CD4-positive, alpha-beta memory T cell (primary cell): ENCODE measurements at regions of chr6 and their contacts with region 1.

Region 1: GRCh38 chr6:26025894-26026832 is 61.1 kb upstream of the HFE start:
- DNase-seq: peak; percentile 90 to 98 (median 94)
- H3K4me3 ChIP-seq: peak overlapping the region; percentile 67 to 74
- H3K4me3 Mint-ChIP-seq: peak overlapping the region; percentile 85 to 98 (median 92)
- H3K27ac ChIP-seq: peak overlapping the region; percentile 89
- H3K27ac Mint-ChIP-seq: peak overlapping the region; percentile 96 to 100 (median 99)
- H3K4me1 ChIP-seq: peaks cover 29% of the 10 kb centered on the region
- H3K4me1 Mint-ChIP-seq: peaks cover 22 to 60% (median 39%) of the 10 kb centered on the region in 4 donors
- H3K27me3 ChIP-seq: no peaks in the 10 kb centered on the region
- H3K27me3 Mint-ChIP-seq: peaks cover 0 to 4% of the 10 kb centered on the region in 2 donors

Region 2: GRCh38 chr6:25992413-25993037 is 33.6 kb before region 1 on chr6:
- CTCF ChIA-PET with region 1: interaction called, 70 read pairs
- POLR2A ChIA-PET with region 1: interaction called, 75 read pairs
- intact Hi-C with region 1: loop called (anchors 1 kb)
- DNase-seq: peak; percentile 85 to 94 (median 89)
- H3K4me3 ChIP-seq: peak overlapping the region; percentile 72 to 95
- H3K4me3 Mint-ChIP-seq: peak overlapping the region; percentile 91 to 95 (median 94)
- H3K27ac ChIP-seq: peak overlapping the region; percentile 64
- H3K27ac Mint-ChIP-seq: peak overlapping the region; percentile 89 to 96 (median 94)
- H3K4me1 ChIP-seq: no peaks in the 10 kb centered on the region
- H3K4me1 Mint-ChIP-seq: peaks cover 9 to 23% (median 16%) of the 10 kb centered on the region in 4 donors
- H3K27me3 ChIP-seq: no peaks in the 10 kb centered on the region
- H3K27me3 Mint-ChIP-seq: no peaks in the 10 kb centered on the region

Region 3: DNA sequence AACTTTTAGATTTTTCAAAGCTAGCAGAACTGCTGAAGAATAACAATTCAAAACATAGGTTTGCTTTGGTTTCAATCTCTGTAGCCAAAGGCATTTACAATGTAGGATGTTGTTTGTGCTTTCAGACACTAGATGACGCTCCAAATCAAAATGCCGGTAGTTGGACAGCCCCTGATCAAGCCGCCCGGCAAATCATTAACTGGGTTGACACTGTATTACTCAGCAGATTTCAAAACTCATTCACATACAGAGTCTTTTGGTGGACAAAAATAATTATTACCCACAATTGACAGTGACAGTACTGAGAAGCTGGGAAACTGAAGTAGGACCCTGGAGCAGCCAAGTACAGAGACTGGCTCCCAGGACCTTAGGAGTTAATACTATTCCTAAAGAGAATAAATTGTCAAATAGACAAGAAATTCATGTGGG is 39.8 kb after region 1 on chr6:
- CTCF ChIA-PET with region 1: interaction called, 15 read pairs
- POLR2A ChIA-PET with region 1: interaction called, 7 read pairs
- intact Hi-C with region 1: no loop called
- DNase-seq: peak; percentile 70 to 76 (median 71)
- H3K4me3 ChIP-seq: no peak overlapping the region
- H3K4me3 Mint-ChIP-seq: no peak overlapping the region
- H3K27ac ChIP-seq: no peak overlapping the region
- H3K27ac Mint-ChIP-seq: peak overlapping the region in 1 of 7 donors; percentile 30
- H3K4me1 ChIP-seq: no peaks in the 10 kb centered on the region
- H3K4me1 Mint-ChIP-seq: peaks cover 4 to 12% (median 7%) of the 10 kb centered on the region in 4 donors
- H3K27me3 ChIP-seq: no peaks in the 10 kb centered on the region
- H3K27me3 Mint-ChIP-seq: peaks cover 0 to 4% of the 10 kb centered on the region in 2 donors

Region 4: DNA sequence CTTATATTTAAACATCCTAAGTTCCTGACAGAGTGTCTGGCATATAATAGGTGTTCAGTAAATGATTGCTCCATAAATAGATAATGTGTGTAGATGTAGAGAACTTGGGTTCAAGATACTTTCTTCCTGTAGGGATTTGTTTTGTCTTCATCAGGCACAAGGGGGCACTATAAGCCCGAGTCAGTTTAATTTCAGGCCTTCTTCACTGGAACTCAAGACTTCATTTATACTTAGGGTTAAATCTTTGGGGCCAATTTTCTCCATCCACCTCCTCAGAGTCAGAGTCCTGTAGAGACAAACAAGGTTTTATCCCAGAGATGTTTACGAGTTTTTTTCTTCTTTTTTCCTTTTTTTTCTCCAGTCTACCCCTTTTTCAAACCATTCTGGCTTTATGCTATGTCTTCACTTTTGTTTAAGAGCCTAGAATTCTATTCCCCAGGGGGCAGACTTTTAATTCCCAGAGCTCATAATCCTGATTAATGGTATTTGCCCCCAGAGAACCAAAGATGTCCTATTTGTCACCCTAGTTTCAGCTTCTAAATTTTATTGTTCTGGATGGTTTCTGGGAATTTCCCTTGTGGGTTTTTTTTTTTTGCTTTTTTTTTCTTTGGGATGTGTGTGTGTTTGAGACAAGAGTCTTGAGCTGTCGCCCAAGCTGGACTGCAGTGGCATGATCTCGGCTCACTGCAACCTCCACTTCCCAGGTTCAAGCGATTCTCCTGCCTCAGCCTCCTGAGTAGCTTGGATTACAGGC is 149.4 kb after region 1 on chr6:
- CTCF ChIA-PET with region 1: no interaction called
- POLR2A ChIA-PET with region 1: interaction called, 12 read pairs
- intact Hi-C with region 1: no loop called
- DNase-seq: peak; percentile 50 to 73 (median 70)
- H3K4me3 ChIP-seq: no peak overlapping the region
- H3K4me3 Mint-ChIP-seq: peak overlapping the region in 4 of 8 donors; percentile 37 to 70 (median 65)
- H3K27ac ChIP-seq: no peak overlapping the region
- H3K27ac Mint-ChIP-seq: peak overlapping the region; percentile 28 to 89 (median 78)
- H3K4me1 ChIP-seq: peaks cover 37% of the 10 kb centered on the region
- H3K4me1 Mint-ChIP-seq: peaks cover 21 to 40% (median 27%) of the 10 kb centered on the region in 4 donors
- H3K27me3 ChIP-seq: no peaks in the 10 kb centered on the region
- H3K27me3 Mint-ChIP-seq: no peaks in the 10 kb centered on the region

Region 5: GRCh38 chr6:26234421-26235296 is 208.5 kb after region 1 on chr6:
- CTCF ChIA-PET with region 1: no interaction called
- POLR2A ChIA-PET with region 1: interaction called, 42 read pairs
- intact Hi-C with region 1: no loop called
- DNase-seq: peak; percentile 70 to 87 (median 85)
- H3K4me3 ChIP-seq: peak overlapping the region; percentile 66 to 95
- H3K4me3 Mint-ChIP-seq: peak overlapping the region; percentile 93 to 99 (median 96)
- H3K27ac ChIP-seq: peak overlapping the region; percentile 83
- H3K27ac Mint-ChIP-seq: peak overlapping the region; percentile 90 to 99 (median 96)
- H3K4me1 ChIP-seq: peaks cover 23% of the 10 kb centered on the region
- H3K4me1 Mint-ChIP-seq: peaks cover 18 to 43% (median 26%) of the 10 kb centered on the region in 4 donors
- H3K27me3 ChIP-seq: no peaks in the 10 kb centered on the region
- H3K27me3 Mint-ChIP-seq: no peaks in the 10 kb centered on the region

Region 6: GRCh38 chr6:27146706-27147505 is 1120.7 kb after region 1 on chr6:
- CTCF ChIA-PET with region 1: interaction called, 4 read pairs
- POLR2A ChIA-PET with region 1: interaction called, 37 read pairs
- intact Hi-C with region 1: no loop called
- DNase-seq: peak; percentile 85 to 96 (median 94)
- H3K4me3 ChIP-seq: peak overlapping the region; percentile 76 to 77
- H3K4me3 Mint-ChIP-seq: no peak overlapping the region
- H3K27ac ChIP-seq: peak overlapping the region; percentile 97
- H3K27ac Mint-ChIP-seq: no peak overlapping the region
- H3K4me1 ChIP-seq: peaks cover 22% of the 10 kb centered on the region
- H3K4me1 Mint-ChIP-seq: peaks cover 10 to 20% (median 13%) of the 10 kb centered on the region in 4 donors
- H3K27me3 ChIP-seq: no peaks in the 10 kb centered on the region
- H3K27me3 Mint-ChIP-seq: no peaks in the 10 kb centered on the region

Region 7: GRCh38 chr6:27838058-27838944 is 1812.1 kb after region 1 on chr6:
- CTCF ChIA-PET with region 1: interaction called, 4 read pairs
- POLR2A ChIA-PET with region 1: interaction called, 53 read pairs
- intact Hi-C with region 1: loop called (anchors 10 kb)
- DNase-seq: peak; percentile 91 to 94 (median 92)
- H3K4me3 ChIP-seq: peak overlapping the region; percentile 63 to 67
- H3K4me3 Mint-ChIP-seq: no peak overlapping the region
- H3K27ac ChIP-seq: peak overlapping the region; percentile 93
- H3K27ac Mint-ChIP-seq: no peak overlapping the region
- H3K4me1 ChIP-seq: peaks cover 30% of the 10 kb centered on the region
- H3K4me1 Mint-ChIP-seq: peaks cover 6 to 20% (median 12%) of the 10 kb centered on the region in 4 donors
- H3K27me3 ChIP-seq: no peaks in the 10 kb centered on the region
- H3K27me3 Mint-ChIP-seq: peaks cover 2 to 3% of the 10 kb centered on the region in 2 donors